ENCODE measurements at regions of chr1 and their contacts with region 1.

Region 1: GRCh38 chr1:229514578-229515275 is 6.6 kb upstream of the NUP133 start:
- DNase-seq: peak; percentile 67
- H3K4me3 ChIP-seq: no peak overlapping the region
- H3K27ac ChIP-seq: no peak overlapping the region
- H3K4me1 ChIP-seq: no peaks in the 10 kb centered on the region
- H3K27me3 ChIP-seq: no peaks in the 10 kb centered on the region
- CTCF ChIP-seq: peak; percentile 77 to 86
- POLR2A ChIP-seq: no peak

Region 2: GRCh38 chr1:228664399-228664914 is 850.3 kb before region 1 on chr1:
- CTCF ChIA-PET with region 1: no interaction called
- POLR2A ChIA-PET with region 1: no interaction called
- dilution Hi-C with region 1: no loop called
- intact Hi-C with region 1: loop called (anchors 10 kb)
- DNase-seq: peak; percentile 61
- H3K4me3 ChIP-seq: no peak overlapping the region
- H3K27ac ChIP-seq: no peak overlapping the region
- H3K4me1 ChIP-seq: no peaks in the 10 kb centered on the region
- H3K27me3 ChIP-seq: no peaks in the 10 kb centered on the region
- CTCF ChIP-seq: peak; percentile 60 to 66
- POLR2A ChIP-seq: no peak

Region 3: GRCh38 chr1:229447809-229448252 is 66.9 kb before region 1 on chr1:
- CTCF ChIA-PET with region 1: no interaction called
- POLR2A ChIA-PET with region 1: no interaction called
- dilution Hi-C with region 1: no loop called
- intact Hi-C with region 1: no loop called
- DNase-seq: no peak
- H3K4me3 ChIP-seq: no peak overlapping the region
- H3K27ac ChIP-seq: no peak overlapping the region
- H3K4me1 ChIP-seq: no peaks in the 10 kb centered on the region
- H3K27me3 ChIP-seq: no peaks in the 10 kb centered on the region
- CTCF ChIP-seq: no peak
- POLR2A ChIP-seq: no peak

Region 4: GRCh38 chr1:229526695-229527094 is 12.0 kb after region 1 on chr1:
- CTCF ChIA-PET with region 1: interaction called, 15 read pairs
- POLR2A ChIA-PET with region 1: no interaction called
- dilution Hi-C with region 1: no loop called
- intact Hi-C with region 1: no loop called
- DNase-seq: no peak
- H3K4me3 ChIP-seq: no peak overlapping the region
- H3K27ac ChIP-seq: no peak overlapping the region
- H3K4me1 ChIP-seq: no peaks in the 10 kb centered on the region
- H3K27me3 ChIP-seq: no peaks in the 10 kb centered on the region
- CTCF ChIP-seq: no peak
- POLR2A ChIP-seq: no peak

Measured in endothelial cell of umbilical vein (primary cell).